ENCODE measurements at regions of chr1 and their contacts with region 1.

Region 1: DNA sequence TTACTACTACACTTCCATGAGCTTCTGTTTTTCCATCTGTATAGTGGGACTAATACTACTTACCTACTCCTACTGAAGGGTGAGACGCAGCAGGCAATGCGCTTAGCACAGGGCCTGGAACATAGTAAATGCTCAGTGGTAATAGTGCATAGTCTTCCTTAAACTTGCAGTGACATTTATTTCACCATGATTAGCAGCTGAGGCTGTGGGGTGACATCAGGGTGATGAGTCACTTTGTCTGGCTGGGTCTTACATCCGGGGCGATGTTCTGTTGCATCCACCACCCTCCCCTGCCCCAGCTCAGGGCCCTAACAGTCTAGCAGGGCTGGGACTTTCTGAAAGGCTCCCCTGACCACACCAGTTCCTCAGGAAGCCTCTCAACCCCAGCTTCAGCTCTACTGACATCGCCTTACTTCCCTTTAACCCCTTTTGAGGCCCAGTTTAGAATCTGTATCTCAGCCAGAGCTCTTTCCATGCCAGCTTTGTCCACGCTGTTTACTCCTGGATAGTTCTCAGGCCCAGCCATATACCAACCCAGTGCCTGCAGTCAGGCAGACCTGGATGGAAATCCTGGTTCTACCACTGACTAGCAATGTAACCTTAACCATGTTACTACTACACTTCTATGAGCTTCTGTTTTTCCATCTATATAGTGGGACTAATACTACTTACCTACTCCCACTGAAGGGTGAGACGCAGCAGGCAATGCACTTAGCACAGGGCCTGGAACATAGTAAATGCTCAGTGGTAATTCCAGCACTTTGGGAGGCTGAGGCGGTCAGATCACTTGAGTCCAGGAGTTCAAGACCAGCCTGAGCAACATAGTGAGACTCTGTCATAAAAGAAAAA is 66.3 kb downstream of the CD58 start:
- DNase-seq: peak; percentile 92
- H3K4me3 Mint-ChIP-seq: peak overlapping the region; percentile 1
- H3K27ac Mint-ChIP-seq: peak overlapping the region; percentile 82
- H3K4me1 Mint-ChIP-seq: peaks cover 53% of the 10 kb centered on the region
- H3K27me3 Mint-ChIP-seq: no peaks in the 10 kb centered on the region

Region 2: DNA sequence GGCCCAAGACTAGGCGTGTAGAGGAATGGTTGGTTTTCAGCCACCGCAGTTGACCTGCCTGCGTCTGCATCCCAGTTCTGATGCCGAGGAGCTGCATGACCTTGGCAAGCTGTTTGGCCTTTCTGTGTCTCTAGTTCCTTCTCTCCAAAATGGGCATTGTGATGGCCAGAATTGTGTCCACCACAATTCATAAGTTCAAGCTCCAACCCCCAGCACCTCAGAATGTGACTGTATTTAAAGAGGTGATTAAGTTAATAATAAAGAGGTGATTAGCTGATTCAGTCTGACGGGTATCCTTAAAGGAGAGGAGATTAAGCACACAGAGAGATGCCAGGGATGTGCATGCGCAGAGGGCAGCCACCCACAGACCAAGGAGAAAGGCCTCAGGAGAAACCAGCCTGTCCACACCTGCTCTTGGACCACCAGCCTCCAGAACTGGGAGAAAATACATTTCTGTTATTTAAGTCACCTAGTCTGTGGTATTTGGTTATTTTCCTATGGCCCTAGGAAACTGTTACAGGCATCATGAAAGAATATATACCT is 364.9 kb before region 1 on chr1:
- CTCF ChIA-PET with region 1: interaction called, 79 read pairs
- intact Hi-C with region 1: loop called (anchors 1 kb)
- DNase-seq: no peak
- H3K4me3 Mint-ChIP-seq: no peak overlapping the region
- H3K27ac Mint-ChIP-seq: no peak overlapping the region
- H3K4me1 Mint-ChIP-seq: peaks cover 7% of the 10 kb centered on the region
- H3K27me3 Mint-ChIP-seq: no peaks in the 10 kb centered on the region

Region 3: GRCh38 chr1:116418091-116418830 is 86.3 kb before region 1 on chr1:
- CTCF ChIA-PET with region 1: interaction called, 3 read pairs
- intact Hi-C with region 1: loop called (anchors 2 kb)
- DNase-seq: peak; percentile 88
- H3K4me3 Mint-ChIP-seq: peak overlapping the region; percentile 87
- H3K27ac Mint-ChIP-seq: peak overlapping the region; percentile 78
- H3K4me1 Mint-ChIP-seq: peaks cover 32% of the 10 kb centered on the region
- H3K27me3 Mint-ChIP-seq: no peaks in the 10 kb centered on the region

Region 4: GRCh38 chr1:116514708-116515525 is 10.4 kb after region 1 on chr1:
- CTCF ChIA-PET with region 1: interaction called, 18 read pairs
- intact Hi-C with region 1: loop called (anchors 1 kb)
- DNase-seq: peak; percentile 73
- H3K4me3 Mint-ChIP-seq: no peak overlapping the region
- H3K27ac Mint-ChIP-seq: peak overlapping the region; percentile 76
- H3K4me1 Mint-ChIP-seq: peaks cover 33% of the 10 kb centered on the region
- H3K27me3 Mint-ChIP-seq: no peaks in the 10 kb centered on the region

Region 5: DNA sequence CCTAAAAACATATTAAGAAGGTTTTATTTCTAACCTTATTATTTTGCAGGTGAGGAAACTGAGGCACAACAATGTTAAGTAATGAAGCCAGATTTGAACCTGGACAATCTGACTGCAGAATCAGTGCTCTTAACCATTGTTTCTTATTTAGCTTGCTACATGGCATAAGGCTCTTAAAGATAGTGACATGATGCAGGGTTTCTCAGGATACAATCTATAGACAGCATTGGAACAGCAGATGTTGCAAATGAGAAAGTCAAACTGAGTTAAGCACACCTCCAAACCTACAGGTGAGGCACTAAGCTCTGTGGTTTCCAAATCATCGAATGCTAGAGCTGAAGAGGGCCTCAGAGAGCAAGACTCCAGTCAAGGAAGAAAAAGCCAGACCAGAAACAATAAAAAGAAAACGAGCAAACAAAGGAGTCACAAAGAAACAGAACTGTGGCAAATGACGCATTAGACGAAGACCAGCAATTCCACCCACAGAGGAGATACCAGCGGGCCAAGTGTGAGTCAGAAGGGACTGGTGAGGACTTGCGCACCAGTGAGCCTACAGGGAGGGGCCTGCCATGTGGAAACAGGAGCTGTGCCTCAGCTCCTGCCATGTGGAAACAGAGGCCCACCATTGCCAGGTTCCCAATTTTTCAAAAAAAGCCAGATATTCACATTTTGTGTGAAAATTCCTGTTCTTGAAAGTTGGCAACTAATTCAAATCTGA is 51.9 kb after region 1 on chr1:
- CTCF ChIA-PET with region 1: interaction called, 4 read pairs
- intact Hi-C with region 1: loop called (anchors 1 kb)
- DNase-seq: peak; percentile 82
- H3K4me3 Mint-ChIP-seq: no peak overlapping the region
- H3K27ac Mint-ChIP-seq: peak overlapping the region; percentile 78
- H3K4me1 Mint-ChIP-seq: peaks cover 56% of the 10 kb centered on the region
- H3K27me3 Mint-ChIP-seq: no peaks in the 10 kb centered on the region

Region 6: DNA sequence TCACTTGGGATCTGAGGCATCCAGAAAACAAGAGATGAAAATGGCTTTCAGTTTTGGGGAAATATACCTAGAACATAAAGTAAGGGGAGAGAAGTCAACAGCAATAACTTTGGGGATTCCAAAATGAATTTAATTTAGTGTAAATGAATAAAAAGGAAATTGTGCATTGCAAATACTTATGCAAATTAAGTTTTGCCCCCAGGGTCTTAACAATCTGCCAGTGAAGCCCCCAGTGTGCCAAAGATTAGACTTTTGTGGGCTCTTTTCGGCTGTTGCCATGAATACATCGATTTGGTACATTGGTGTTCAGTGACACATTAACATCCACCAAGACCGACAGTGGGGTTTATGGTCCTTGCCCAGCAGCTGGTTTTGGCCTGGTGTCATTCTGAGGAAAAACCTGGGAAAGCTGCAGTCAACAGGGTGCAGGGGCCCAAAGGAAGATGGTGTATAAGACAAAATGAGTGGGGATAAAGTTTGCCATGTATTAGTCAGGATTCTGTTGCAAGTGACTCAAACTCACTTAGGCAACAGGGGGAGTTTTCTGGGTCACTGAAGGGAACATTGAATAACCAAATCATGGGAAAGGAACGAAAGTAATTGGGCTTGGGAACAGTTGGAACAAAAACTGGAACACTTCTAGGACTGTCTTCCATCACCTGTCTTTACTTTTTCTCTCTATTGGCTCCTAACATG is 193.2 kb after region 1 on chr1:
- CTCF ChIA-PET with region 1: no interaction called
- intact Hi-C with region 1: no loop called
- DNase-seq: no peak
- H3K4me3 Mint-ChIP-seq: no peak overlapping the region
- H3K27ac Mint-ChIP-seq: no peak overlapping the region
- H3K4me1 Mint-ChIP-seq: no peaks in the 10 kb centered on the region
- H3K27me3 Mint-ChIP-seq: no peaks in the 10 kb centered on the region

Region 7: GRCh38 chr1:116826818-116827606 is 322.5 kb after region 1 on chr1:
- CTCF ChIA-PET with region 1: no interaction called
- intact Hi-C with region 1: loop called (anchors 1 kb)
- DNase-seq: peak; percentile 92
- H3K4me3 Mint-ChIP-seq: peak overlapping the region; percentile 83
- H3K27ac Mint-ChIP-seq: peak overlapping the region; percentile 97
- H3K4me1 Mint-ChIP-seq: peaks cover 74% of the 10 kb centered on the region
- H3K27me3 Mint-ChIP-seq: no peaks in the 10 kb centered on the region

Region 8: GRCh38 chr1:117009132-117009531 is 504.6 kb after region 1 on chr1:
- CTCF ChIA-PET with region 1: no interaction called
- intact Hi-C with region 1: loop called (anchors 5 kb)
- DNase-seq: peak; percentile 48
- H3K4me3 Mint-ChIP-seq: peak overlapping the region; percentile 30
- H3K27ac Mint-ChIP-seq: peak overlapping the region; percentile 72
- H3K4me1 Mint-ChIP-seq: peaks cover 60% of the 10 kb centered on the region
- H3K27me3 Mint-ChIP-seq: no peaks in the 10 kb centered on the region

Measured in activated naive CD4-positive, alpha-beta T cell treated with anti-CD3 and anti-CD28 coated beads for 36 hours (primary cell).